Sigmoid colon (tissue), 7 donors: ENCODE measurements at regions of chr12 and their contacts with region 1.

Region 1: DNA sequence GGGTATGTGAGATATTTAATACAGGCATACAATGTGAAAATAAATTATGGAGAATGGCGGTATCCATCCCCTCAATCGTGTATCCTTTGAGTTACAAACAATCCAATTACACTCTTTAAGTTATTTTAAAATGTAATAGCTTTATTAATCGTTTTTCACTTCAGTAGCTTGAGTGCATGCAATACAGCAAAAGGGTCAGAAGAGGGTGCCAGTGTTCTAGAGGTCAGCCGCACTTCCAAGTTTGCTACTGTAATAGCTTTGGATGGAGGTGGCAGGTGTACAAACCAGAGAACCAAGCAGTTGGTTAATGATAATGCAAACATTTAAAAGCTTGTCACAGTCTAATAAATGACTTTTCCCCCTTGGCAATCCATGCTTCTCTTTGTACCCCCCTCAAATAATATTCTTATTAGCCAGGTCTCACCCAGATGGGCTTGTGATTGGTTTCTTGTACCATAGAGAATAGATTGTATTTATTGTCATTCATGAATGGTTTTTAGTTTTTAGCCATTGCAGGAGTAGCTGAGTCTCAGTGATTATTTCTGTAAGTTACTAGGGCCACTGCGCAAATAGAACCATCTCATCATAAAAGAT is 127.0 kb downstream of the ERC1 start:
- DNase-seq: peak; percentile 81
- H3K4me3 ChIP-seq: no peak overlapping the region
- H3K27ac ChIP-seq: no peak overlapping the region
- H3K4me1 ChIP-seq: no peaks in the 10 kb centered on the region
- H3K27me3 ChIP-seq: no peaks in the 10 kb centered on the region
- CTCF ChIP-seq: peak; percentile 81 to 95 (median 90)
- EP300 ChIP-seq: no peak
- POLR2A ChIP-seq: no peak

Region 2: DNA sequence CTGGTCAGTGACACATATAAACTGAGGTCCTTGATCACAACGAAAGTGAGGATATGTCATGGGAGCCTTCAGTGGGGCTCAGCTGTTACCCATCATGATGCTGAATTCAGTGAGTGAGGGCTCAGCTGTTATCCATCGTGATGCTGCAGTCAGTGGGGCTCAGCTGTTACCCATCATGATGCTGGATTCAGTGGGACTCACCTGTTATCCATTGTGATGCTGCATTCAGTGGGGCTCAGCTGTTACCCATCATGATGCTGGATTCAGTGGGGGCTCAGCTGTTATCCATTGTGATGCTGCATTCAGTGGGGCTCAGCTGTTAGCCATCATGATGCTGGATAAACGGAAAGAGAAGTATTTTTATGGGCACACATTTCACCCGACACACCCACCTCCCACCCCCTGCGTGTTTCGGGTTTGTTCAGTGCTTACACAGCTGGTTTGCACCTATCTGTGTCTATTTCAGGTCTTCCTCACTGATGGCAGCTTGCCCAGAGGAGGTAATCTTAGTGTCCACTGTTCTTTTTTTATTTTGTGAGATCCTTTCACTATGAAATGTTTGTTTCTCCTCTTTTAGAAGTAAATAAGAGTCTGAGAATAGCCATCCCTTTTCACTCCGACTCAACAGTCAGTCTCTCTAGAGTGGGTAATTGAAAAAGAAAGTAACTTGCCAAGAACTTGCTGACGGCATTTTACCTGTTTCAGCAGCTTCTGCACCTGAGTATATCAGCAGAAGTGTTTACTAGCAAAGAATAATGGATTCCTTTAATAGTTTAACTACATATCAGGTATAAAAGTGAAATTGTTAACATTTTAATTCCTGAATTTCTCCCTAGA is 55.9 kb after region 1 on chr12:
- intact Hi-C with region 1: no loop called
- DNase-seq: no peak
- H3K4me3 ChIP-seq: no peak overlapping the region
- H3K27ac ChIP-seq: no peak overlapping the region
- H3K4me1 ChIP-seq: no peaks in the 10 kb centered on the region
- H3K27me3 ChIP-seq: no peaks in the 10 kb centered on the region
- CTCF ChIP-seq: no peak
- EP300 ChIP-seq: no peak
- POLR2A ChIP-seq: no peak

Region 3: DNA sequence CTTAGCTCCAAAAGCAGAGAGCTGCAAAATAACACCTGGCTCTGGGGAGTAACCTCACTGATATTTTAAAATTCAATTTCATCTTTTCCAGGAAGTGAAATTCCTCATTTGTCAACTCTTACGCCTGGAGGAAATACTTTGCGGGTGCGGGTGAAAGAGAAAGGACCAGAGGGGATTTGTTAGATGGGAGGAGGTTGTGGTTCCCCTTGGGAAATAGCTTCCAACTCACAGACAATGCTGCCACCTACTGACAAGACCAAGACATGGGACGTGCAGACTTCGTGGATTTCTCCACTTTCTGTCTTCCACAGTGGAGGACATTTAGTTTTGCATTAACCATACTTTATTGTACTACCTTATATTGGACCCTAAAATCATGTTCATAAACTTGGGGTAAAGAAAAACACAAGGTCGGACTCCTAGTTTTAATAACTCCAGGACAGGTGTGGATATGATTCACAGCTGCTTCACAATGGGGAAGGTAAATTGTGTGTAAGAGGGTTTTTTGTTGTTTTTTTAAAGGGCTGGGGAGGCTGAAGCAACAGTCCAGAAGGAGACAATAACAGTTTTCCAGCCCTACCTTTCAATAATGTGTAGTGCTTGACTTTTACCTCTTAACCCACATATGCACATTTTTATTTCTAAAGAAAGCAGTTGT is 465.5 kb after region 1 on chr12:
- intact Hi-C with region 1: loop called (anchors 2 kb)
- DNase-seq: peak; percentile 86
- H3K4me3 ChIP-seq: peak overlapping the region in 3 of 4 donors; percentile 20 to 31 (median 24)
- H3K27ac ChIP-seq: no peak overlapping the region
- H3K4me1 ChIP-seq: peaks cover 0 to 30% (median 24%) of the 10 kb centered on the region in 4 donors
- H3K27me3 ChIP-seq: no peaks in the 10 kb centered on the region
- CTCF ChIP-seq: peak; percentile 85 to 94 (median 89)
- EP300 ChIP-seq: no peak
- POLR2A ChIP-seq: no peak